ENCODE measurements at regions of chr3 and their contacts with region 1.

Region 1: DNA sequence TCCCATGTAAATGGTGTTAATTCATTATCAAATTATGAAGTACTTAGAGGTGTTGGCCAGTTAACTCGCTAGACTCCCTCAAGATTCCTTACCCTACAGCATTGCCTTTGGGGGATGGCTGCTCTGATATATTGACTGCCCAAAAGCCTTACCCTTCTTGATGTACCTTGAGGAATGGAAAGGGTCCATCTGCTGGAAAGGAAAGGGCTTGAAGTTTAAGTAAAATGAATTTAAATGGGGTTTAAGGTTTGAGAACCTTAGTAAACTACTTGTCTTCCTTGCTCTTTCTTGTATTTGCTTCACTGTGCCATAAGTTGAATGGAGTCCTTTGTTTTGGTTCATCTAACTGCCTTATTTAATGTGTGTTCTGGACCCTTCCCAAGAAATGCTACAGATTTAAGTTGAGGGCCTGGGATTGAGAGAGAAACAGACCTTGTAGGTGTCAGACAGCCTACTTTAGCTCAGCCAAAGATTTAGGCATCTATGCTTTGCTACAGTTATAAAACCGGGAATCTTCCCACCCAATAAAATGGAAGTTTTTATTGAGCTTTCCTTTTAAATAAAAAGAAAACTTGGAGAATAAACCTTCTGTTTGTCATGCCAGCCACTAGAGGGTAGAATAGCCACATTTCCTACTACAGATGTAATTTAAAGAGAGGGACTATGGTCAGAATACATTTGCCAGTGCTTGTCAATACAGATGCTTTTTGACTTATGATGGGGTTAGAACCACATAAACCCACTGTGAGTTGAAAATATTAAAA is 25.3 kb downstream of the CMSS1 start:
- DNase-seq: peak in 1 of 2 donors; percentile 32
- ATAC-seq: peak; percentile 49 to 83 (median 74)
- H3K4me3 ChIP-seq: peak overlapping the region in 1 of 10 donors; percentile 3
- H3K27ac ChIP-seq: peak overlapping the region in 8 of 10 donors; percentile 2 to 81 (median 76)
- H3K4me1 ChIP-seq: peaks cover 0 to 60% (median 50%) of the 10 kb centered on the region in 9 donors
- H3K27me3 ChIP-seq: no peaks in the 10 kb centered on the region
- CTCF ChIP-seq: peak; percentile 47 to 83 (median 72)

Region 2: GRCh38 chr3:99875929-99876841 is 33.2 kb after region 1 on chr3:
- intact Hi-C with region 1: loop called in 1 of 10 experiments (anchors 2 kb)
- DNase-seq: peak; percentile 84 to 86
- ATAC-seq: peak; percentile 94 to 97 (median 94)
- H3K4me3 ChIP-seq: peak overlapping the region; percentile 55 to 88 (median 75)
- H3K27ac ChIP-seq: peak overlapping the region; percentile 70 to 98 (median 94)
- H3K4me1 ChIP-seq: peaks cover 2 to 65% (median 44%) of the 10 kb centered on the region in 9 donors
- H3K27me3 ChIP-seq: no peaks in the 10 kb centered on the region
- CTCF ChIP-seq: peak in 3 of 9 donors; percentile 23 to 40 (median 40)

Region 3: GRCh38 chr3:99895703-99896441 is 52.9 kb after region 1 on chr3:
- intact Hi-C with region 1: no loop called
- DNase-seq: no peak
- ATAC-seq: peak in 7 of 8 donors; percentile 21 to 63 (median 48)
- H3K4me3 ChIP-seq: peak overlapping the region in 1 of 10 donors; percentile 12
- H3K27ac ChIP-seq: peak overlapping the region in 1 of 10 donors; percentile 84
- H3K4me1 ChIP-seq: peaks cover 0 to 25% (median 4%) of the 10 kb centered on the region in 9 donors
- H3K27me3 ChIP-seq: no peaks in the 10 kb centered on the region
- CTCF ChIP-seq: no peak

Region 4: DNA sequence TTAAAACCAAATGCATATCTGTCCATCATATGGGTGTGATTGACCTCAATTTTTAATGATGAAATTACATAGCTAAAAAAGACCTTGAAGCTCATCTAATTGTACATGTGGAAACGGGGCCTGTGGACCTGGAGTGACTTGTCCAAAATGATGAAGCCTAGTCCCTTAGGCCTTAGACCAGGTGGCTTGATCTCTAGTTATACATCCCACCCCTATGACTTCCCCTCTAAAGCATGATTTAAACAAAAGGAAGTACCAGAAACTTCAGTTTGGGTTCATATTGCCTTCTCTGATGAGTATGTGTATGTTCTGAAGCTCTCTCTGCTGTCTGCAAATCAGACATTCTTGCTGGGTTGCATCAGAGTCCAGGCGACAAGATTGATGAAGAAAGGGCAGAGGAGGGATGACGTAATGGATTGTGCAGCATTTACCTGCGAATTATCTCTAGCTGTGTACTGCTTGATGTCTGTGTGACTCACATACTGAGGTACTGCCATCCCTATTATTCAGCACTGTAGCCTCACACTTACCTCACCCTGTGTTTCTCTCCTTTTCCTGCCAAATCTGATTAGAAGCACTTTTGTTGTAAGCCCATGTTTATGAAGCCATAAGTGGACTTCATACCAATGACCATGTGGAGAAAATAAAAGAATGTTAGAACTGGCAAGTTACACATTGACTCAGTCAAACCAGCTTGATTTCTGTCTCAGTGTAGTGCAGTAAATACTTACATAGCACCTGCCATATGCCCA is 159.8 kb after region 1 on chr3:
- intact Hi-C with region 1: loop called in 2 of 10 experiments (anchors 2 to 5 kb)
- DNase-seq: no peak
- ATAC-seq: peak in 6 of 8 donors; percentile 42 to 74 (median 64)
- H3K4me3 ChIP-seq: no peak overlapping the region
- H3K27ac ChIP-seq: peak overlapping the region in 1 of 10 donors; percentile 5
- H3K4me1 ChIP-seq: peaks cover 15 to 57% (median 35%) of the 10 kb centered on the region in 9 donors
- H3K27me3 ChIP-seq: no peaks in the 10 kb centered on the region
- CTCF ChIP-seq: no peak

Region 5: DNA sequence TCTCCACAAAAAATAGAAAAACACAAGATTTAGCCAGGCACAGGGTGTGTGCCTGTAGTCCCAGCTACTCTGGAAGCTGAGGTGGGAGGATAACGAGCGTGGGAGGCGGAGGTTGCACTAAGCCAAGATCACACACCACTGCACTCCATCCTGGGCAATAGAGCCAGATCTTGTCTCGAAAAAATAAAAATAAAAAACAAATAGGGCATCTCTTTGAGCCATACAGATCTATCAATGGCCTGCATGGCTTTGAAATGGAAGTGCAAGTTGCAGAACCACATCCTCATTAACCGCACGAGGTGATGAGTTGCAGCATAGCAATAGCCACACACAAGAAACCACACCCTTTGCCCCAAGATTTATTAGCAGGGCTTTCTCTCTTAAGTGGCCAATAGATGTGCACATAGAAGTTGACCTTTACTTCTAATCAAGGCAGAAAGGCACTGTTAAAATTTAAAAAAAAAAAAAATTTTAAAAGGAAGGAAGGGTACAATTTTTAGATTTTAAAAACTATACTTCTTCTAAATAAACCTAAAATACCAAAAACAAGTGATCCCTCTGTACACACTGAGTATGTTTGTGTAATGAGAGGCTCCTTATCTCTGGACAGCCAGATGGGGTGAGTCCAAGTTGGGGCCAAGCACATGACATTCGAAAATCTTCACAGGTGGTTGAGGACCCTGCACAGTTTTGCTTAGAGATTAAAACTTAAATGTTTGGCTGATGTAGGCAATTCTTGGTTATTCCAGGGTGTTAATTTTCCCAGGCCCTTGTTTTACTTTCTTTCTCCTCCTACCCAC is 217.9 kb after region 1 on chr3:
- intact Hi-C with region 1: loop called in 9 of 10 experiments (anchors 5 to 10 kb)
- DNase-seq: no peak
- ATAC-seq: peak in 3 of 8 donors; percentile 12 to 44 (median 23)
- H3K4me3 ChIP-seq: no peak overlapping the region
- H3K27ac ChIP-seq: peak overlapping the region in 1 of 10 donors; percentile 21
- H3K4me1 ChIP-seq: peaks cover 0 to 36% (median 16%) of the 10 kb centered on the region in 9 donors
- H3K27me3 ChIP-seq: no peaks in the 10 kb centered on the region
- CTCF ChIP-seq: no peak

Region 6: DNA sequence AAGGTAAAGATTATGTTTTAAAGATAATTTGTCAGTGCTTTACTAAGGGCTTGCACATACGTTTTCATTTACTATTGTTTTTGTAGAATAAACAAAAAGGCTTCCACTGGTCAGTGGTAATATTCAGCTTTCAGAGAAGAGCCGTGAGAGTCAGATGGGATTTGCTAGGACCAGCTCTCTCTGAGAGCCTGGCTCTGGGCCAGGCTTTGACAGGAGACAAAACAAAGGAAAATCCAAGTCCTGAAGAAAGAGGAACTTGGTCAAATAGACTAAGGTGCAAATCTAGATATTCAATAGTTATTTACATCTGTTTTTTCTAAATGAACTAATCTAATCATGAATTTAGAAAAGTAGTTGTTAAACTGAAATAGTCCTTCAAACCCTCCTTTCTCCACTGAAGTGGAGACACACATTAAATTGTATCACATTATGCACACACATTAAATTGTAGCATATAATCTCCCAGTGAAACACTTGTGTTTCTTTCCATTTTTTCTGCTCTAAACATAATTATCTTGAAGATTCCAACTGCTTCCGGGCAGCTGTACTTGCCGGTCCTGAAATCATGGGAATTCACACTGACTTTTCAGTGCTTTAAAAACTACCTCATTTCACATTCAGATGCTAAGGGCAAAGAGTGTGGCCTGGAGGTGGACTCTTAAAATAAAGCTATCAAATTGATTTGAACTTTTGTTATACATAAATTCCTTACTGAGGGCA is 326.4 kb after region 1 on chr3:
- intact Hi-C with region 1: loop called in 1 of 10 experiments (anchors 5 kb)
- DNase-seq: peak; percentile 30 to 39
- ATAC-seq: peak in 4 of 8 donors; percentile 33 to 66 (median 44)
- H3K4me3 ChIP-seq: no peak overlapping the region
- H3K27ac ChIP-seq: peak overlapping the region in 6 of 10 donors; percentile 5 to 62 (median 38)
- H3K4me1 ChIP-seq: peaks cover 11 to 50% (median 25%) of the 10 kb centered on the region in 9 donors
- H3K27me3 ChIP-seq: no peaks in the 10 kb centered on the region
- CTCF ChIP-seq: no peak

Region 7: DNA sequence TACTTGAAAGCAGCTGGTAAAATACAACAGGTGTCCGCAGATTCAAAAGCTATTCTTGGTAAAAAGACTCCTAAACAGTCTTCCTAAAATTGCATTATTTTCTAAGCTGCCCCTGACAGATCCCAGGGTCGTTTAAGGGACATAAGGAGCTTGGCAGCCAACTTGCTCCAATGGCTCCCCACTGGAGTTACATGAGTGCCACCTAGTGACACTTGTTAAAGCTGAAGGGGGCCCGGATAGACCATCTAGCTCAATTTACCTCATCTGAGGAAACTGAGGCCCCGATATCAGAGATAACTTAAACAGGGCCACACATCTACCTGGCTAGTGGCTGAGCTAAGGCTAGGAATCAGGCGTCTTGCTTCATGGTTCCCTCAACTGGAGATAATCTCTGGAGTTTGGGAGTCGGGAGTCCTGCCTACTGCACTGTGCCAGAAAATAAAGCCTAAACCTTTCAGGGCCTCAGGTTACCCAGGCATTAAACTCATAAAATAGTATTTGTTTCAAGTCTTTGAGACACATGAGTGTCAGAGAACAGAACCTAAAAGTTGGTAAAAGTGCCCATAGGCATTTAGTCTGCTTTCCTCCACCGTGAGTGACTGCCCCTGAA is 411.3 kb after region 1 on chr3:
- intact Hi-C with region 1: loop called in 9 of 10 experiments (anchors 1 to 5 kb)
- DNase-seq: peak; percentile 25 to 79
- ATAC-seq: peak; percentile 85 to 96 (median 92)
- H3K4me3 ChIP-seq: no peak overlapping the region
- H3K27ac ChIP-seq: peak overlapping the region in 6 of 10 donors; percentile 22 to 74 (median 53)
- H3K4me1 ChIP-seq: peaks cover 0 to 28% (median 8%) of the 10 kb centered on the region in 9 donors
- H3K27me3 ChIP-seq: no peaks in the 10 kb centered on the region
- CTCF ChIP-seq: peak; percentile 73 to 93 (median 84)